Left lung (tissue), 14 donors: ENCODE measurements at regions of chr1 and their contacts with region 1.

Region 1: DNA sequence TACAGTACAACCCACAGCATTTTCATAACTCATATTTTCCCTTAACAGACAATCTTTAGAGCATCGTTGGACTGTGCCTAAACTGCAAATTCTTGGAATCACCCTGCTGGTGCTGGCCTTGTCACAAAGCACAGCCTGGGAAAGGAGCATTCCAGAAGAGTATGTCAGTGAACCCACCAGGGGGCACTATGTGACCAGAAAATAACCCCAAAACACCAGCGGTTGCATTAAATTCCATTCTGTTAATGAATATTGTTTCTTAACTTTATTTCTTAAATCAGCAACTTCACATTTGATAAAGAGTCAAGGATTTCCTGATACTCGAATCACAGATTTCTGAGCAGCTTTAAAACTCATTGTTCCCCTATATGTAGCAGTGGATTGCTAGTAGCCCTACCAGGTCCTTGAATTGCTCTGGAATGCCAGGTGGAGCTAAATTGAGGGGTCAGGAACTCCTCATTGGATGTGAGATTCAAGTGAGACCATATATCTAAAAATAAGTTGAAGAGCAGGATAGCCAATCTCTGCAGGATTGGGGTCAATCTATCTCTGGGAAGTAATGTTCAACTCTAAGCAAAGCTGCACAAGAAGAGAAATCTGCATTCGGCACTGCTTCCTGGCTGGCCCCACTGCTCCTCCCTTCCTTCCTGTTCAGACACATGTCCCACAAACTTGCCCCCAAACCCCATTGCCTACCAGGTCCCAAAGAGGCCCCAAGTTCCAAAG is 12.7 kb upstream of the RAB4A start:
- DNase-seq: peak in 2 of 4 donors; percentile 65 to 81
- ATAC-seq: peak; percentile 95
- H3K4me3 ChIP-seq: no peak overlapping the region
- H3K27ac ChIP-seq: no peak overlapping the region
- H3K4me1 ChIP-seq: peaks cover 0 to 15% of the 10 kb centered on the region in 2 donors
- H3K27me3 ChIP-seq: no peaks in the 10 kb centered on the region
- CTCF ChIP-seq: peak; percentile 80 to 88

Region 2: GRCh38 chr1:229139331-229140118 is 118.7 kb before region 1 on chr1:
- intact Hi-C with region 1: no loop called
- DNase-seq: no peak
- ATAC-seq: no peak
- H3K4me3 ChIP-seq: no peak overlapping the region
- H3K27ac ChIP-seq: no peak overlapping the region
- H3K4me1 ChIP-seq: peaks cover 0 to 10% of the 10 kb centered on the region in 2 donors
- H3K27me3 ChIP-seq: no peaks in the 10 kb centered on the region
- CTCF ChIP-seq: no peak

Region 3: DNA sequence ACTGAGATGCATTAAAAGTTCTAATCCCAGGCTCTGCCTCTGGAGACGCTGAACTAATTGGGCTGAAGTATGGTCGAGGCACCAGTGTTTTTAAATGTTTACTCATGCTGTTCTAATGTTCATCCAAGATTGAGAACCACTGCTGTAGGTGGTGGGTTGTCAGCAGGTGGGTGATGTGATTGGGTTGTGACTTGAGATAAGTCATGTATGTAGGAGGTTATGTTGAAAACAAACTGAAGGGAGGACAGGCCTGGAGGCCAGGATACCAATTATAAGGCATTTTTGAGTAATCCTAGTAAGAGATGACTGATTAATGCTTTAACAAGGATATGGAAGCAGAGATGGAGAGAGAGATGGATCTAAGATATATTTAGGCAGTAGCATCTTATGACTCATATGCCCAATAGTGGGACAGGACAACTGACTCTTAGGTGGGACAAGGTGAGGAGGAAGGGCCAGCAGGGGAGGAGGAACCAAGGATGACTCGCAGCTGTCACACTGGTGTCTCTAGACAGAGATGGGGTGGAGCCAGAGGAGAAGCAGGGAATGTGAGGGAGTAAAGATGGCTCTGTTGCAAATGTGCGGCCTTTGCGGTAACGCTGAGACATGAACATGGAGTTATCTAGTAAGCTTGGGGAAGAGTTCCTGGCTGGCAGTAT is 42.0 kb after region 1 on chr1:
- intact Hi-C with region 1: no loop called
- DNase-seq: no peak
- ATAC-seq: no peak
- H3K4me3 ChIP-seq: no peak overlapping the region
- H3K27ac ChIP-seq: no peak overlapping the region
- H3K4me1 ChIP-seq: no peaks in the 10 kb centered on the region
- H3K27me3 ChIP-seq: no peaks in the 10 kb centered on the region
- CTCF ChIP-seq: no peak

Region 4: GRCh38 chr1:229339520-229339919 is 81.3 kb after region 1 on chr1:
- intact Hi-C with region 1: no loop called
- DNase-seq: no peak
- ATAC-seq: no peak
- H3K4me3 ChIP-seq: no peak overlapping the region
- H3K27ac ChIP-seq: no peak overlapping the region
- H3K4me1 ChIP-seq: peaks cover 15 to 32% of the 10 kb centered on the region in 2 donors
- H3K27me3 ChIP-seq: peaks cover 0 to 10% of the 10 kb centered on the region in 2 donors
- CTCF ChIP-seq: no peak

Region 5: DNA sequence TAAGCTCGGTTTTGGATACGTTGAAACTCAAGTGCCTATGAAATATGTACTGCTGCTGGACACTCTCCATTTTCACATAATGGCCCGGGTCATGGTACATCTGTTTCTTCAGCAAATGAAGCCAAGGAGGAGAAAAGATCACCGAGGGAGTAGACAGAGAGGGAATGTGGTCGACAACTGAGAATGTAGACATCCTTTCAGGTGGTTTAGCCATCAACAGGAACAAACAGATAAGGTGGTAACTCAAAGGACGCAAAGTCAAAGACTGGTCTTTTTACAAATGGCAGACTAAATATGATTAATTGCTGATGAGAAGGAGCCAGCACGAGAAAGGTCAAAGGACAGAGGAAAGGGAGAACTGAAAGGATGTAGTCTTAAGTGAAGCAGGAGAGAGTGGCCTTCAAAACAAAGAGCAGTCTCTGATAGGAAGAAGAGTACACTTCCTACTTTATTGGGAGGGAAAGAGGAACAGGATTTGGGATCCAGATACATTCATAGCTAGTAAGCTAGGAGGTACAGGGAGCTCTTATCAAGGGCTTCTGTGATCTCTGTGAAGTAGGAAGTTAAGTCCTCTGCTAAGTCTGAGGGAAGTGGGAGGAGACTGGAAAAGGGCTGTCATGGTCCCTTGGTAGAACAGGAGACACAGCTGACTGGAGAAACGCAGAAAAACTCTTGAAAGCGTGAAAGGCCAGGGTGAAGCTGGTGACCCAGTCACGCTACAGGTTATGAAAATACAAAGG is 221.6 kb after region 1 on chr1:
- intact Hi-C with region 1: loop called in 1 of 2 experiments (anchors 10 kb)
- DNase-seq: no peak
- ATAC-seq: no peak
- H3K4me3 ChIP-seq: no peak overlapping the region
- H3K27ac ChIP-seq: no peak overlapping the region
- H3K4me1 ChIP-seq: no peaks in the 10 kb centered on the region
- H3K27me3 ChIP-seq: no peaks in the 10 kb centered on the region
- CTCF ChIP-seq: no peak

Region 6: GRCh38 chr1:229781453-229781852 is 523.3 kb after region 1 on chr1:
- intact Hi-C with region 1: no loop called
- DNase-seq: peak in 3 of 4 donors; percentile 30 to 75 (median 39)
- ATAC-seq: peak; percentile 95
- H3K4me3 ChIP-seq: no peak overlapping the region
- H3K27ac ChIP-seq: no peak overlapping the region
- H3K4me1 ChIP-seq: no peaks in the 10 kb centered on the region
- H3K27me3 ChIP-seq: no peaks in the 10 kb centered on the region
- CTCF ChIP-seq: peak; percentile 17 to 21